ENCODE measurements at regions of chr17 and their contacts with region 1.

Region 1: DNA sequence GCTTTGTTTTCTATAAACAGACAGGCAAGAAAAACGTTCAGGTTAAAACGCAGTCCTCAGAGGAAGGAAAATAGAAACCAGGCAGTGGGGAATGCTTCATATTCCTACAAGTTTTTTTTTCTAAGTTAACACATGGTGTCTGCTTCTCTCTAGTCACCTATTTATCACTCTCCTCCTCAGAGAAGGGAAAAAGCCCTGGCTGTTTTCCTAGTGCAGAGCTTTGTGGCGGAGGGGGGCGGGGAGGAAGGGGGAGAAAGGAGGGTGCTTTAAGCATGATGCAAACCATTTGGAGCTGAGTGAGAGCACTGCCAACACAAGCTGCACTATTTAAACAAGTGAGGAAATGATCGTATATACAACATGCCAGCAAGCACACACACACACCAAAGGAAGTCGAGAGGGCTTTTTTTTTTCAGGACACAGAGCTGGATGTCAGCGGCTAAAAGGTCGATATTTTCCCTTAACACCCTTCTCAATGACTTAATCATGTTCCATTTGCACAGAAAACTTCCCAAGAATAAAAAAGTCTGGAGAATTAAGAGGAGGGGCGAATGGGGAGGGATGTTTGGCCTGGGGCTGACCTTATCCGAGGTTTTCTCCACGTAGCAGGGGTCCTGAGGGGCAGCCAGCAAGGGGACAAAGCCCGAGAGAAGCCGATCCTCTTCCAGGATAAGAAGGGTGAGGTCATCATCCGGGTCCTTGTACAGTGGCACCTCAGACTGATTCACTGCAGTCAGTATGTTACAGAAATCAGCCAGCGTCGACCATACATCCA is 117.4 kb downstream of the HIC1 start:
- DNase-seq: peak; percentile 79
- ATAC-seq: peak; percentile 79

Region 2: GRCh38 chr17:2111719-2112118 is 60.5 kb before region 1 on chr17:
- intact Hi-C with region 1: no loop called
- DNase-seq: no peak
- ATAC-seq: no peak

Region 3: DNA sequence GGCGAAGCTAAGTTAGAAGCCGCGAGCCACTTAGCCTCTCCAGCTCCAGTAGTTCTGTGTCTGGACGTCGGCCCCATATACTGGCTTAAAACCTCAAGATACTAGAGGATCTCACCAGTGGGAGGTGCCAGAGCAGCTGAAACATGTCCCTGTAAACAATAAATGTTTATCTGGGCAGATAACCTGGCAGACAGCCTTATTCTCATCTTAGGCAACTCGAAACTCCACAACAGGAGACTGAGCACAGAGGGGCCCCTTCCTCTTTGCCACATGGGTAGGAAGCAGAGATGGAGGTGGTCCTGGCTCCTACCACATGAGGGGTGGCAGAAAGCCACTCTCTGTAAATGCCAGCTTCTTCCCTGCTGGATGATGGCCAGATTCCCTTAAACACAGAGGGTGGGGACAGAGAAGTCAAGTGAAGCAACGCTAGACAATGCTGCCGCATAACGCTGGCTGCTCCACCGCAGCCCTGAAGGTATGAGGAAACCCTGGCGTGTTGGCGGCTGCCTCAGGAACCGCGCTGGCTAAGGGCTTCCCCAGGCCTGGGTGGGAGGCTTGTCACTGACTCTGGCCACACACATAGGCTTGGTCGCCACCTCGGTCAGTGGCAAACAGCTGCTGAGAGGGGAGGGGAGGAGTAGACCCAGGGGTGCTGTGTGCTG is 49.5 kb before region 1 on chr17:
- intact Hi-C with region 1: loop called (anchors 10 kb)
- DNase-seq: peak; percentile 85
- ATAC-seq: peak; percentile 75

Region 4: GRCh38 chr17:2215616-2216364 is 43.5 kb after region 1 on chr17:
- intact Hi-C with region 1: loop called (anchors 2 kb)
- DNase-seq: peak; percentile 89
- ATAC-seq: peak; percentile 78

Measured in Right ventricle myocardium inferior (tissue), 1 donor.